Testis (tissue), 5 donors: ENCODE measurements at regions of chr11 and their contacts with region 1.

Region 1: DNA sequence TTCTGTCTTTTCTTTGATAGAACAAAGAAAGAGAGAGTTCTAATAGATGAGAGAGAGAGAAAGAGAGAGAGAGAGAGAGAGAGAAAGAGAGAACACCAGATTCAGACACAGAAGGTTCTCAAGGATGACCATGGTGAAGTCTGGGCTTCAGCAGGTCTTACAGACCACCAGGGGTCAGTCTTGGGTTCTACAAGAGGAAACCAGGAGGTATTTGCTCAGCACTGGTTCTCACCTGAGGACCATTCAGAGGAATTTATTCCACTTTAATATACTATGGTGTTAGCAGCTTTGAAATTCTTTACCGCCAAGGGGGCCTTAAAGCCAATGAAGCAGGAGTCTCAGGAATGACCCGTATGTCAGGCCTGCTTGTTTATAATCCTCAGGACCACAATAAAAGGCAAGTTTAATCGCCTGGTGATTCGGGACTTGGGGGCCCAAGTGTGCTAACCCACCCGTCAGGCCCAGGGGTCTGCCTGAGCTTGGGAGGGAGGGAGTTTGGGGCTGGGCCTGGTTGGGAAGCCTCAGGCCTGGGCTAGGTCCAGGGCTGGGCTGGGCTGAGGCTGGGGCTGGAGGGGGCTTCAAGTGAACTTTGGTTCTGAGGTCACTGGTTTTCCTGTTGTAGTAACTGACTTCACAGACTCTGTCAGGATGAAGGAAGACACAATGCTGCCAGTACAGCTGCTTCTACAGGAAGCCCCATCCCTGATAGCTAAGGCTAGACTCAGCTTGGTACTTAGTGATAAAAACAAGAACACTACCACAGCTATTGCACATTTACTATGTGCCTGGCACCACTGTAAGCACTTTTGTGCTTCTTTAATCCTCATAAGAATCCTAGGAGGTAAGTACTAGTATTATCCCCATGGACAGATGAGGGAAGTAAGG is 179.2 kb upstream of the ZBED5 start:
- DNase-seq: peak; percentile 53
- H3K4me3 ChIP-seq: no peak overlapping the region
- H3K27ac ChIP-seq: no peak overlapping the region
- H3K4me1 ChIP-seq: peaks cover 17% of the 10 kb centered on the region
- H3K27me3 ChIP-seq: no peaks in the 10 kb centered on the region
- CTCF ChIP-seq: peak; percentile 39 to 56 (median 42)
- POLR2A ChIP-seq: no peak

Region 2: DNA sequence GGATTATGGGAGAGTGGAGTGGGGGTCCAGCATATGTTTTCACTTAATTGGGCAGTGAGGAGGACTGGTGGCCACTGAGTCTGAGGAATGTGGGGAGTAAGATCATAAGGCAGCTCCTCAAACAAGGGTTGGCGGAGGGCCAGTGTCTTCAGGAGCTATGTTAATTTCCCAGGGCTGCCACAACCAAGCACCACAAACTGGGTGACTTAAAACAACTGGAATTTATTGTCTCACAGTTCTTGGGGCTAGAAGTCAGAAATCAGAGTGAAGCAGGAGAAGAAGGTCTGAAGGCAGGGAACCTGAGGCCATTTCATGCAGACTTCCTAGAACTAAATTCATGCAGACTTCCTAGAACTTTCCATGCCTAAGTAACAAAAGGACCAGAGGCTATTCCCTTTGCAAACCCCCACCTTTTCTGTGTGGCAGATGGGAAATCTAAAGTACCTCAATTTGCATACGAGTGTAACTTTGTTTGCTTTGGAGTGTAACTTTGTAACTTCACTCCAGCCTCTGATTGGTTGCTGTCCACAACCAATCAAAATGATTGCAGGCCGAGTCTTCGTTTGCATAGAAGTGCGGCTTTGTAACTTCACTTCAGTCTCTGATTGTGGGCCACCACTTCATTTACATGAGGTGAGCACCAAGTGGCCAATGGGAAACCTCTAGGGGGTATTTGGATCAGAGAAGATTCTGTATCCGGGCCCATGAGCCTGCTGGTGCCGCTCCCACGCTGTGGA is 128.7 kb before region 1 on chr11:
- intact Hi-C with region 1: no loop called
- DNase-seq: peak; percentile 55
- H3K4me3 ChIP-seq: no peak overlapping the region
- H3K27ac ChIP-seq: no peak overlapping the region
- H3K4me1 ChIP-seq: no peaks in the 10 kb centered on the region
- H3K27me3 ChIP-seq: no peaks in the 10 kb centered on the region
- CTCF ChIP-seq: no peak
- POLR2A ChIP-seq: no peak

Region 3: GRCh38 chr11:11207428-11207827 is 170.3 kb after region 1 on chr11:
- intact Hi-C with region 1: no loop called
- DNase-seq: no peak
- H3K4me3 ChIP-seq: no peak overlapping the region
- H3K27ac ChIP-seq: no peak overlapping the region
- H3K4me1 ChIP-seq: no peaks in the 10 kb centered on the region
- H3K27me3 ChIP-seq: no peaks in the 10 kb centered on the region
- CTCF ChIP-seq: no peak
- POLR2A ChIP-seq: no peak

Region 4: GRCh38 chr11:11787305-11788062 is 750.4 kb after region 1 on chr11:
- intact Hi-C with region 1: loop called (anchors 5 kb)
- DNase-seq: peak; percentile 80
- H3K4me3 ChIP-seq: no peak overlapping the region
- H3K27ac ChIP-seq: no peak overlapping the region
- H3K4me1 ChIP-seq: no peaks in the 10 kb centered on the region
- H3K27me3 ChIP-seq: no peaks in the 10 kb centered on the region
- CTCF ChIP-seq: peak; percentile 78 to 96 (median 91)
- POLR2A ChIP-seq: no peak